A673 (cell line): ENCODE measurements at regions of chr3 and their contacts with region 1.

Region 1: GRCh38 chr3:176395240-176395639 is 802.0 kb downstream of the TBL1XR1 start:
- DNase-seq: no peak
- H3K4me3 ChIP-seq: no peak overlapping the region
- H3K27ac ChIP-seq: no peak overlapping the region
- H3K4me1 ChIP-seq: no peaks in the 10 kb centered on the region
- H3K27me3 ChIP-seq: no peaks in the 10 kb centered on the region
- CTCF ChIP-seq: no peak

Region 2: GRCh38 chr3:176362191-176362731 is 33.0 kb before region 1 on chr3:
- CTCF ChIA-PET with region 1: no interaction called
- POLR2A ChIA-PET with region 1: no interaction called
- intact Hi-C with region 1: loop called (anchors 1 kb)
- DNase-seq: no peak
- H3K4me3 ChIP-seq: no peak overlapping the region
- H3K27ac ChIP-seq: no peak overlapping the region
- H3K4me1 ChIP-seq: no peaks in the 10 kb centered on the region
- H3K27me3 ChIP-seq: no peaks in the 10 kb centered on the region
- CTCF ChIP-seq: no peak